Mucosa of descending colon (tissue), 3 donors: ENCODE measurements at regions of chr18 and their contacts with region 1.

Region 1: GRCh38 chr18:46657115-46657955 is at the start of gene LOXHD1:
- DNase-seq: no peak
- ATAC-seq: no peak
- H3K4me3 ChIP-seq: no peak within 1 kb of the TSS
- H3K4me1 ChIP-seq: no peaks in the 10 kb centered on the region
- CTCF ChIP-seq: no peak
- total RNA-seq, gene LOXHD1: 0.06 TPM in 1 of 3 donors, not detected in the others

Region 2: DNA sequence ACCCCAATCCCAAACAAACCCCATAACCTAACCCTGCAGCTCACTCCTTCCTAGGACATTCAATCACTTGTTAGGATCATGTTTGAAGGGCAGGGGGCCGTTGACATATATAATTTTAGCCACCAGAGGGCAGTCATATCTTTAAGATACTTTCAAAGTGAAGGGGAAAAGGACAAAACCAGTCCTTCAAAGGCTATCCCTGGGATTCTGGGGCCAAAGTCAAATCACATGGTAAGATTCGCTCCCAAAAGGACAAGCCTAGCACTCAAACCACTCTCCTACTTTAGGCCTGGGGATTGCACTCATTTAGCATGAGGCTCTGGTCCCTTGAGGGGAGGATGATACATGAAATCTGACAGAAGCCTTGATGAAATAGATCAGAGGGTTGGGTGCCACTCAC is 508.5 kb before region 1 on chr18:
- intact Hi-C with region 1: loop called in 1 of 2 experiments (anchors 5 kb)
- DNase-seq: peak in 1 of 3 donors; percentile 80
- ATAC-seq: peak; percentile 72
- H3K4me3 ChIP-seq: no peak overlapping the region
- H3K4me1 ChIP-seq: no peaks in the 10 kb centered on the region
- CTCF ChIP-seq: peak; percentile 26

Region 3: GRCh38 chr18:46173393-46174341 is 483.7 kb before region 1 on chr18:
- intact Hi-C with region 1: loop called in 1 of 2 experiments (anchors 5 kb)
- DNase-seq: peak; percentile 95 to 96 (median 95)
- ATAC-seq: peak; percentile 98
- H3K4me3 ChIP-seq: peak overlapping the region; percentile 98
- H3K4me1 ChIP-seq: peaks cover 10% of the 10 kb centered on the region
- CTCF ChIP-seq: peak; percentile 85

Region 4: GRCh38 chr18:46281185-46282176 is 375.9 kb before region 1 on chr18:
- intact Hi-C with region 1: loop called in 1 of 2 experiments (anchors 5 kb)
- DNase-seq: peak in 2 of 3 donors; percentile 77 to 80
- ATAC-seq: peak; percentile 86
- H3K4me3 ChIP-seq: no peak overlapping the region
- H3K4me1 ChIP-seq: no peaks in the 10 kb centered on the region
- CTCF ChIP-seq: peak; percentile 75